Activated CD4-positive, alpha-beta T cell treated with anti-CD3 and anti-CD28 coated beads, Interleukin-2, amount 10 ng/mL, durations not matched to agents 24 days and 14 days (primary cell): ENCODE measurements at regions of chr3 and their contacts with region 1.

Region 1: GRCh38 chr3:167929968-167930367 is 165.8 kb downstream of the GOLIM4 start:
- DNase-seq: no peak
- H3K4me3 Mint-ChIP-seq: no peak overlapping the region
- H3K27ac Mint-ChIP-seq: no peak overlapping the region
- H3K4me1 Mint-ChIP-seq: no peaks in the 10 kb centered on the region
- H3K27me3 Mint-ChIP-seq: no peaks in the 10 kb centered on the region

Region 2: DNA sequence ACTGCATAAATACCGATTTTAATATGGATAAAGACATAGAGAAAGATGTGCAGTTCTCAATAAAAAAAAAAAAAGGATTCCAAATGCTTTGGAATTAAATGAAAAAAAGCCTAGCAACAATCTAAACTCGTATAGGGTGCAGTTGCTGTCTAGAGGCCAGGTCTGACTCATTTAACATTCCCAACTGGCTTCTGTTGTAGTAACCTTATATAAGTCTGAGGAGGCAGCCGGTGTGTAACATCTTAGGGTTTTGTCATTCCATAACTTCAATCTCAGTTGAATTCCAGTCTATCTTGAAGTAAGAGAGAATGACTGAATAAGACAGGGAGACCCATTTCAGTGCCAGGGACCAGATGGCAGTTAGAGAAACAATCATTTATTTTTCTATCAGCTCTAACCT is 201.8 kb before region 1 on chr3:
- intact Hi-C with region 1: no loop called
- DNase-seq: no peak
- H3K4me3 Mint-ChIP-seq: no peak overlapping the region
- H3K27ac Mint-ChIP-seq: no peak overlapping the region
- H3K4me1 Mint-ChIP-seq: peaks cover 34% of the 10 kb centered on the region
- H3K27me3 Mint-ChIP-seq: no peaks in the 10 kb centered on the region

Region 3: GRCh38 chr3:168040607-168041208 is 110.7 kb after region 1 on chr3:
- intact Hi-C with region 1: loop called (anchors 1 kb)
- DNase-seq: no peak
- H3K4me3 Mint-ChIP-seq: no peak overlapping the region
- H3K27ac Mint-ChIP-seq: no peak overlapping the region
- H3K4me1 Mint-ChIP-seq: no peaks in the 10 kb centered on the region
- H3K27me3 Mint-ChIP-seq: no peaks in the 10 kb centered on the region

Region 4: GRCh38 chr3:168165390-168166269 is 235.7 kb after region 1 on chr3:
- intact Hi-C with region 1: loop called (anchors 5 kb)
- DNase-seq: peak; percentile 76
- H3K4me3 Mint-ChIP-seq: no peak overlapping the region
- H3K27ac Mint-ChIP-seq: no peak overlapping the region
- H3K4me1 Mint-ChIP-seq: peaks cover 2% of the 10 kb centered on the region
- H3K27me3 Mint-ChIP-seq: no peaks in the 10 kb centered on the region